Endothelial cell of umbilical vein (primary cell): ENCODE measurements at regions of chr14 and their contacts with region 1.

Region 1: DNA sequence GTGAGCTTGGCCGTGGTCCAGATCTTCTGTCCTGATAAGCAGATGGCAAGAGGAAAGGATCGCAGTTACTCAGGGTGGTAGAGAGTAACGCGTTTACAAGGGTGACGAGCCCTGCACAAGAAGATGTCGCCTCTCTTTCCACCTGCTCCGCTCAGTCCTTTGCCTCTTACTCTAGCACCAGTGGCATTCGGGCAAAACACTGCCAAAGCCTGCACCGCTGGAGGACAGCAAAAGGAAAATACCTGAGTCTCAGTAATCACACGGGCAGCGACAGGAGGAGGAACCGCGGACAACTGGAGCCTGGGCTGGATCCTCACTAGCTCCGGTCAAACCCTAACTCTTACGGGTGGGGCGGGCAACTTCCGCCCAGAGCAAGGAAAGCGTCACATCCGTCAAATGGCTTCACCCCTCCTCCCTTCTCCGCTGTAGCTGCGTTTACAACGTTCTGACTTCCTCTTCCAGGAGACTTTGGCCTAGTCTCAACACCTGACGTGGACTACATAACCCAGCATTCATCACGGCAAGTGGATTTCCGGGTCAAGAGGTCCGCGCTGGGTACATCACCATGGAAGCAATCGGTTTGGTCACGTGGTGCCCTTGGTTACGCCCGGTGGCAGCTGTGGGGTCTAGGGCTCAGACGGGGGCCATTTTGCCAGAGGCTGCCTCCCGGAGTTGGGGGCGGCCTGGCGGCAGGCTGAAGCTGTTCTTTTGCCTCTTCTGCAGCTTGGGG is at the starts of genes KLHL28 and TOGARAM1:
- DNase-seq: peak; percentile 100
- H3K4me3 ChIP-seq: peak within 1 kb of the TSS; percentile 71 to 83 (median 72)
- H3K27ac ChIP-seq: peak within 1 kb of the TSS; percentile 60
- H3K4me1 ChIP-seq: peaks cover 35% of the 10 kb centered on the region
- H3K27me3 ChIP-seq: no peaks in the 10 kb centered on the region
- CTCF ChIP-seq: no peak
- POLR2A ChIP-seq: peak; percentile 95
- total RNA-seq, gene KLHL28: 7.3 and 8.4 TPM in 2 replicates
- total RNA-seq, gene TOGARAM1: 13.3 and 13.8 TPM in 2 replicates

Region 2: GRCh38 chr14:44830371-44830770 is 131.4 kb before region 1 on chr14:
- CTCF ChIA-PET with region 1: no interaction called
- POLR2A ChIA-PET with region 1: no interaction called
- dilution Hi-C with region 1: no loop called
- intact Hi-C with region 1: no loop called
- DNase-seq: no peak
- H3K4me3 ChIP-seq: no peak overlapping the region
- H3K27ac ChIP-seq: no peak overlapping the region
- H3K4me1 ChIP-seq: no peaks in the 10 kb centered on the region
- H3K27me3 ChIP-seq: no peaks in the 10 kb centered on the region
- CTCF ChIP-seq: no peak
- POLR2A ChIP-seq: no peak

Region 3: GRCh38 chr14:44988694-44989093 is 26.9 kb after region 1 on chr14:
- CTCF ChIA-PET with region 1: no interaction called
- POLR2A ChIA-PET with region 1: no interaction called
- dilution Hi-C with region 1: no loop called
- intact Hi-C with region 1: no loop called
- DNase-seq: no peak
- H3K4me3 ChIP-seq: no peak overlapping the region
- H3K27ac ChIP-seq: no peak overlapping the region
- H3K4me1 ChIP-seq: no peaks in the 10 kb centered on the region
- H3K27me3 ChIP-seq: no peaks in the 10 kb centered on the region
- CTCF ChIP-seq: no peak
- POLR2A ChIP-seq: no peak

Region 4: GRCh38 chr14:45083971-45084722 is 122.4 kb after region 1 on chr14 and contains the start of gene PRPF39:
- CTCF ChIA-PET with region 1: no interaction called
- POLR2A ChIA-PET with region 1: no interaction called
- dilution Hi-C with region 1: no loop called
- intact Hi-C with region 1: loop called (anchors 1 kb)
- DNase-seq: peak; percentile 95
- H3K4me3 ChIP-seq: peak within 1 kb of the TSS; percentile 50 to 86 (median 81)
- H3K27ac ChIP-seq: peak within 1 kb of the TSS; percentile 63
- H3K4me1 ChIP-seq: peaks cover 8% of the 10 kb centered on the region
- H3K27me3 ChIP-seq: no peaks in the 10 kb centered on the region
- CTCF ChIP-seq: no peak
- POLR2A ChIP-seq: peak; percentile 97
- total RNA-seq, gene PRPF39: 36.3 and 44.4 TPM in 2 replicates